ENCODE measurements at regions of chrX and their contacts with region 1.

Region 1: DNA sequence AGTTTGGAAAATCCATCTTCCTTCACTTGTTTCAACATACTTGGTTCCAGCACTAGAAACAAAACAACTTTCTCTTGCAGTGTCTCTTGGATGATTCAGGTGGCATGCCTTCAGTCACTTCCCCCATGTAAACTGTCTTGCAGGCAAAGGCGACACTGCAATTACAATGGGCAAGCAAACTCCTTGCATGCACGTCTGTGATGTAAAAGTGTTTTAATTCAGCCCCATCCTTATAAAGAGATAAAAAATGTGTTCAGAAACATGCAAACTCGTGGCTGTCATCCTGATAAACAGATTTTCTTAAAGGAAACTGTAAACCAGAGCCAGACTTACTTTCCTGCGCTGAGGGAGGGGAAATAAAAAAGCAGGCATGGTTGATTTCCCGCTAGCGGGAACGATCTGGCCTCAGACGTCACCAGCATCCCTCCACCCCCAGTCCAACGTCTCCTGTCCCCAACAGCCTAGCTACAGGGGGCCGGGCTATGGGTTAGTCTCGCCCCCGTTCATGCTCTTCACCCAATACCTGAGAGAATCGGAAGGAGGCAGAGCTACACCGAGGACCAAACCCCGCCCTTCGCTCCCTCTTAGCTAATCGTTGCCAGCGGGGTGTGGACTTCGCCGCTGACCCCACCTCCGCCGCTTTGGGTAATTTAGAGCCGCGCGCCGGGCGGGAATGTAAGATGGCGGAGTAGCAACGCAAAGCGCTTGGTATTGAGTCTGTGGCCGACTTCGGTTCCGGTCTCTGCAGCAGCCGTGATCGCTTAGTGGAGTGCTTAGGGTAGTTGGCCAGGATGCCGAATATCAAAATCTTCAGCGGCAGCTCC is at the start of gene PRPS1:
- DNase-seq: peak; percentile 88 to 96 (median 90)
- ATAC-seq: peak; percentile 99
- H3K4me3 ChIP-seq: peak within 1 kb of the TSS; percentile 68
- H3K27ac ChIP-seq: peak within 1 kb of the TSS; percentile 92
- H3K4me1 ChIP-seq: peaks cover 8 to 16% of the 10 kb centered on the region in 2 experiments; a peak in 4 of 5 replicates
- H3K27me3 ChIP-seq: no peaks in the 10 kb centered on the region
- CTCF ChIP-seq: no peak
- EP300 ChIP-seq: no peak
- POLR2A ChIP-seq: peak; percentile 88
- RAD21 ChIP-seq: no peak
- polyA plus RNA-seq, gene PRPS1: 47.8 to 50.9 TPM

Region 2: DNA sequence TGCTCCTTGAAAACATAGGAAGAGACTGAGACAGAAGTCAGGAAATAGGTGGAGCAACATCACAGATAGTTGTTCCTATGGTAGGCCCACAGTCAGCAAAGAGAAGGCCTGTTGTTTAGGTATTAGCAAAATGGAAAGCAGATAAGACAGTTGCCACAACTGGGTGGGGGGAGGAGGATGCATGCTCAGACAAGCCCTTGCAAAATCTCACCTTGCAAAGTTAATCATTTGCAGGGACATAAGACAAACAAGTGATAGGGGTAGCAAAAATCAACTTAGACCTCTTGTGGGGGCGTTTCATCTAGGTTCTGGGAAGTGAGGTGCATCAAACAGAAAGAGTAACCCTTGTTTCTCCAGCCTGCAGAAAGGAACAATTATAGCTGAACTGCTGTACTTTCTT is 1620.2 kb before region 1 on chrX:
- CTCF ChIA-PET with region 1: no interaction called
- POLR2A ChIA-PET with region 1: no interaction called
- in situ Hi-C with region 1: no loop called
- intact Hi-C with region 1: no loop called
- DNase-seq: no peak
- ATAC-seq: no peak
- H3K4me3 ChIP-seq: no peak overlapping the region
- H3K27ac ChIP-seq: no peak overlapping the region
- H3K4me1 ChIP-seq: no peaks in the 10 kb centered on the region
- H3K27me3 ChIP-seq: no peaks in the 10 kb centered on the region
- CTCF ChIP-seq: no peak
- EP300 ChIP-seq: no peak
- POLR2A ChIP-seq: no peak
- RAD21 ChIP-seq: no peak

Region 3: DNA sequence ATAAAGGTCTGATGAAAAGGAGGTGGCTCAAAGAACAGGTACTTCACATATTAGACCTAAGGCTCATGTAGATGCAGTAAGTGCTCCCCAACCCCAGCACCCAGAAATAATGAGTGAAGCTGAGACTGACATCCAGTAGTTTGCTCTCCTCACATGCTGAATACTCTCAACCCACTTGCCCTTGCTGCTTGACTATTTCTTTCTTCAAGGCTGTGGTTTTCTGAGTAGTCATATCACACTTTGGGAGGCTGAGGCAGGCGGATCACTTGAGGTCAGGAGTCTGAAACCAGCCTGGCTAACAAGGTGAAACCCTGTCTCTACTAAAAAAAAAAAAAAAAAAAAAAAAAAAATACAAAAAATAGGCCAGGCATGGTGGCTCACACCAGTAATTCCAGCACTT is 51.2 kb before region 1 on chrX:
- CTCF ChIA-PET with region 1: no interaction called
- POLR2A ChIA-PET with region 1: interaction called, 4 read pairs
- in situ Hi-C with region 1: no loop called
- intact Hi-C with region 1: loop called (anchors 5 kb)
- DNase-seq: no peak
- ATAC-seq: no peak
- H3K4me3 ChIP-seq: no peak overlapping the region
- H3K27ac ChIP-seq: no peak overlapping the region
- H3K4me1 ChIP-seq: peaks cover 4 to 22% of the 10 kb centered on the region in 2 experiments; a peak in 3 of 5 replicates
- H3K27me3 ChIP-seq: 0 out of 5 replicates have a peak, but pooled peaks cover 0 to 3% of the 10 kb centered on the region in 2 experiments
- CTCF ChIP-seq: no peak
- EP300 ChIP-seq: no peak
- POLR2A ChIP-seq: no peak
- RAD21 ChIP-seq: no peak

Region 4: DNA sequence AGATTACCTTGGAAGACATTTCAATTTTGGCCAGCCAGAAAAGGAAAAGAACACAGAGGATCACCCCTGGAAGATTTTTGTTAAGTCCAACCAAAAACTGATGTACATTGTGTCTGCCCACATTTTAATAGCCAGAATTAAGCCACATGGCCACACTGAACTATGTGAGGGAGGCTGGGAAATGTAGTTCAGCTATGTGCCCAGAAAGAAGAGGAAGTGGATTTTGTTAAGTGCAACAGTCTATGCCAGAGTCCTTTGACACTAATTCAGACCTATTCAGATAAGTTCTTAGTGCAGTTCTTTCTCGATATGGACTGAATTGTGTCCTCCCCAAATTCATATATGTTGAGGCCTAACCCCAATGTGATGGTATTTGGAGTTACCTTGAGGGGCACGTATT is 18.7 kb after region 1 on chrX:
- CTCF ChIA-PET with region 1: no interaction called
- POLR2A ChIA-PET with region 1: interaction called, 10 read pairs
- in situ Hi-C with region 1: no loop called
- intact Hi-C with region 1: no loop called
- DNase-seq: no peak
- ATAC-seq: no peak
- H3K4me3 ChIP-seq: no peak overlapping the region
- H3K27ac ChIP-seq: no peak overlapping the region
- H3K4me1 ChIP-seq: no peaks in the 10 kb centered on the region
- H3K27me3 ChIP-seq: no peaks in the 10 kb centered on the region
- CTCF ChIP-seq: no peak
- EP300 ChIP-seq: no peak
- POLR2A ChIP-seq: no peak
- RAD21 ChIP-seq: no peak

Measured in K562 (cell line).